T-cell (primary cell): ENCODE measurements at regions of chr4 and their contacts with region 1.

Region 1: GRCh38 chr4:120991930-120992329 is 69.4 kb upstream of the PRDM5 start:
- DNase-seq: no peak
- ATAC-seq: no peak
- H3K4me3 ChIP-seq: no peak overlapping the region
- H3K4me3 Mint-ChIP-seq: no peak overlapping the region
- H3K27ac ChIP-seq: no peak overlapping the region
- H3K27ac Mint-ChIP-seq: no peak overlapping the region
- H3K4me1 ChIP-seq: peaks cover 0 to 9% of the 10 kb centered on the region in 2 experiments
- H3K4me1 Mint-ChIP-seq: peaks cover 8 to 22% (median 16%) of the 10 kb centered on the region in 3 donors
- H3K27me3 ChIP-seq: peaks cover 0 to 4% of the 10 kb centered on the region in 2 experiments
- H3K27me3 Mint-ChIP-seq: peaks cover 2 to 5% of the 10 kb centered on the region in 2 donors

Region 2: GRCh38 chr4:120977435-120977997 is 14.4 kb before region 1 on chr4:
- CTCF ChIA-PET with region 1: no interaction called
- POLR2A ChIA-PET with region 1: no interaction called
- DNase-seq: peak in 4 of 35 experiments; percentile 1 to 39 (median 2)
- ATAC-seq: peak in 2 of 4 experiments; percentile 44 to 64
- H3K4me3 ChIP-seq: no peak overlapping the region
- H3K4me3 Mint-ChIP-seq: no peak overlapping the region
- H3K27ac ChIP-seq: no peak overlapping the region
- H3K27ac Mint-ChIP-seq: no peak overlapping the region
- H3K4me1 ChIP-seq: no peaks in the 10 kb centered on the region
- H3K4me1 Mint-ChIP-seq: peaks cover 0 to 1% (median 0%) of the 10 kb centered on the region in 3 donors
- H3K27me3 ChIP-seq: no peaks in the 10 kb centered on the region
- H3K27me3 Mint-ChIP-seq: no peaks in the 10 kb centered on the region

Region 3: GRCh38 chr4:121003863-121004262 is 11.9 kb after region 1 on chr4:
- CTCF ChIA-PET with region 1: interaction called, 3 to 10 read pairs
- POLR2A ChIA-PET with region 1: interaction called in 1 of 2 experiments, 3 read pairs
- DNase-seq: no peak
- ATAC-seq: no peak
- H3K4me3 ChIP-seq: no peak overlapping the region
- H3K4me3 Mint-ChIP-seq: no peak overlapping the region
- H3K27ac ChIP-seq: no peak overlapping the region
- H3K27ac Mint-ChIP-seq: no peak overlapping the region
- H3K4me1 ChIP-seq: peaks cover 6 to 8% of the 10 kb centered on the region in 2 experiments
- H3K4me1 Mint-ChIP-seq: peaks cover 20 to 34% (median 28%) of the 10 kb centered on the region in 3 donors
- H3K27me3 ChIP-seq: peaks cover 0 to 9% of the 10 kb centered on the region in 2 experiments
- H3K27me3 Mint-ChIP-seq: peaks cover 0 to 7% of the 10 kb centered on the region in 2 donors